Right lobe of liver (tissue), 6 donors: ENCODE measurements at regions of chr15 and their contacts with region 1.

Region 1: DNA sequence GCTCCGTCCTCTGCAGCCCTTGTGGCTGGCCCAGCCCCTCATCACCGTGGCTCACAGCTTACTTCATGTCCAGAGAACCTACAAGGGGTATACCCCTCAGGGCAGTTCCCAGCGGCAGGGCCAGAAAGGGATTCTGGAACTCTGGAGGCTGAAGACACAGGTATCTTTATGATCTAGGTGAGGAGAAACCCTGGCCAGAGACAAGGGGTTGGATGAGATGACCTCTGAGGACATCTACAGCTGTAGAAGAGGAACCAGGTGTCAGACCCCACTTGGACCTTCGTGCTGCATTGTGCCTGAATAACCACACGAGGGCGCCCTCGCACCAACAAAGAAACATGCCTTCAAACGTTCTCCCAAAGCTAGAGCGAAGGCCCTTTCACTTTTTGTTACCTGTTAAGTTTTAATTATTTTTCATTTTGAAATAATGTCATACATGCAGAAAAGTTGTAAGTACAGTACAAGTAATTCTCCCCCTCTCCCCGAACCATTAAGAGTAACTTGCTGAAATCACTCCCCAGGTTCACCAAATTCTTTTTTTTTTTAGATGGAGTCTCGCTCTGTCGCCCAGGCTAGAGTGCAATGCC is 118.7 kb upstream of the SMAD3 start:
- DNase-seq: peak; percentile 60 to 72 (median 68)
- ATAC-seq: peak; percentile 87 to 94 (median 90)
- H3K4me3 ChIP-seq: peak overlapping the region in 1 of 3 donors; percentile 5
- H3K27ac ChIP-seq: no peak overlapping the region
- H3K4me1 ChIP-seq: no peaks in the 10 kb centered on the region
- H3K27me3 ChIP-seq: no peaks in the 10 kb centered on the region
- CTCF ChIP-seq: peak; percentile 95 to 97 (median 96)
- POLR2A ChIP-seq: no peak

Region 2: DNA sequence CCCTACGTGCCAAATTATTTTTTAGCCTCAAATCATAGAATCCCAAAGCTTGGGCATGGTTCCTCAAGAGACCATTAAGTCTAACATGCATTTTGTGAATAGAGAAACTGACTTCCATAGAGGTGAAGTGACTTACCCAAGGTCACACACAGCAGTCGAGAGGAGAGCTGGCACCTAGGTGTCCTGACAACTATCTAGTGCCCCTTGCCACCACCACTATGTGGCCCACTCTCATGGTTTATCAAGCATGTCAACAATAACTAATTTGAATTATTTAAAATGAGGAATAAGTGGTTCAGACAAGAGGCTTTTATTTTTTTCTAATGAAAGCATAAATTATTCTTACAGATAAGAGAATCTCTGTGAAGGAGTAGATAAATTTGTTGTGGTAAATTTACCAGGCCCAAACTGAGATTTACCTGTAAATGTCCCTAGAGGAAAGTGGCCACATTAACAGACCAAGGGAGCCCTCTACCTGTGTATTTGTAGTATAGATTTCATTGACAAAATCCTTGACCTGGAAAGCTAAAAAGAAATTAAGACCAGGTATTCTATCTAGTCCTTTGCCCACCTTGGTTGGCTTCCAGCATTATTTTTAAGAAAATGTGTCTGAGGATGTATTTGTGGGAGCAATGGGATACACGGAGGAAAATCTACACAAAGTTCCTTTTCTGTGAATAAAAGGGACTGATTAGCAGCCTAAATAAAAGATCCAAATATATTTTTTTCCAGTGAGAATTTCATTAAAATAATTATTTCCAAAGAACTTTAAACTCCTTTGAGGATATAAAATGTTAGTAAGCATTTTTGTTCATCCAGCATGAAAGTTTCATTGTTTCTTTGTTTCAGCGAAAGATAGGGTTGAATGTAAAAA is 357.1 kb after region 1 on chr15:
- intact Hi-C with region 1: loop called in 1 of 2 experiments (anchors 10 kb)
- DNase-seq: no peak
- ATAC-seq: peak; percentile 77 to 86 (median 80)
- H3K4me3 ChIP-seq: no peak overlapping the region
- H3K27ac ChIP-seq: no peak overlapping the region
- H3K4me1 ChIP-seq: no peaks in the 10 kb centered on the region
- H3K27me3 ChIP-seq: no peaks in the 10 kb centered on the region
- CTCF ChIP-seq: peak; percentile 59 to 79 (median 62)
- POLR2A ChIP-seq: no peak

Region 3: DNA sequence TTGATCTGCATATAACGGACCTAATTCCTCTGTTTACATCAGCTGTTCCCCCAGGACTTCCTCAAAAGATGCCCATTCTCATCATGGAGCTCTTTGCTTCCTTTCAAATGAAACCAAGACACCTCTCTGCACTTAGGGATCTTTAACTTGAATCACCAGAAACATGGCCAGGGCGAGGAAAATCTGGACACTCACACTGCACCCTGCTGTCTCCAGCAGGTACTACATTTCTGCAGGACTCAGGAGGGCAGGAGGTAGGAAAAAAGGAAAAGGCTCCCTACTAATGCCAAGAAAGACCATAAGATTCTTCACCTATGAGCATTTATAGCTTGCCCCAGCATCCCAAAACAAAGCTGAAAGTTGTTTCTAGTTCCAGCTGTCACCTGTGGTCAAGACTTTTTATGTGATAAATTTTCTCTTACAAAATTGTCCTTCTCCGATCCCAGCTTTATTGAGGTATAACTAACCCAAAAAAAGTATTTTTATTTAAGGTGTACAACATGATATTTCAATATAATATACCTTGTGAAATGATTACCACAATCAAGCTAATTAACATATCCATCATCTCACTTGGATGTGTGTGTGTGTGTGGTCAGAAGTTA is 486.9 kb after region 1 on chr15:
- intact Hi-C with region 1: loop called in 1 of 2 experiments (anchors 5 kb)
- DNase-seq: peak in 2 of 3 donors; percentile 36 to 48
- ATAC-seq: peak; percentile 92 to 97 (median 94)
- H3K4me3 ChIP-seq: no peak overlapping the region
- H3K27ac ChIP-seq: no peak overlapping the region
- H3K4me1 ChIP-seq: peaks cover 0 to 3% (median 0%) of the 10 kb centered on the region in 4 donors
- H3K27me3 ChIP-seq: no peaks in the 10 kb centered on the region
- CTCF ChIP-seq: peak; percentile 75 to 81 (median 78)
- POLR2A ChIP-seq: no peak